ENCODE measurements at regions of chr11 and their contacts with region 1.

Region 1: GRCh38 chr11:92211576-92212167 is 12.9 kb upstream of the FAT3 start:
- DNase-seq: peak; percentile 33
- ATAC-seq: peak; percentile 83
- H3K4me3 ChIP-seq: no peak overlapping the region
- H3K27ac ChIP-seq: no peak overlapping the region
- H3K4me1 ChIP-seq: no peaks in the 10 kb centered on the region
- H3K27me3 ChIP-seq: no peaks in the 10 kb centered on the region
- CTCF ChIP-seq: peak; percentile 39
- POLR2A ChIP-seq: no peak
- RAD21 ChIP-seq: peak; percentile 60

Region 2: GRCh38 chr11:91707652-91708482 is 503.8 kb before region 1 on chr11:
- CTCF ChIA-PET with region 1: no interaction called
- POLR2A ChIA-PET with region 1: no interaction called
- dilution Hi-C with region 1: no loop called
- in situ Hi-C with region 1: no loop called
- intact Hi-C with region 1: no loop called
- DNase-seq: no peak
- ATAC-seq: no peak
- H3K4me3 ChIP-seq: no peak overlapping the region
- H3K27ac ChIP-seq: no peak overlapping the region
- H3K4me1 ChIP-seq: no peaks in the 10 kb centered on the region
- H3K27me3 ChIP-seq: no peaks in the 10 kb centered on the region
- CTCF ChIP-seq: no peak
- POLR2A ChIP-seq: no peak
- RAD21 ChIP-seq: no peak

Region 3: DNA sequence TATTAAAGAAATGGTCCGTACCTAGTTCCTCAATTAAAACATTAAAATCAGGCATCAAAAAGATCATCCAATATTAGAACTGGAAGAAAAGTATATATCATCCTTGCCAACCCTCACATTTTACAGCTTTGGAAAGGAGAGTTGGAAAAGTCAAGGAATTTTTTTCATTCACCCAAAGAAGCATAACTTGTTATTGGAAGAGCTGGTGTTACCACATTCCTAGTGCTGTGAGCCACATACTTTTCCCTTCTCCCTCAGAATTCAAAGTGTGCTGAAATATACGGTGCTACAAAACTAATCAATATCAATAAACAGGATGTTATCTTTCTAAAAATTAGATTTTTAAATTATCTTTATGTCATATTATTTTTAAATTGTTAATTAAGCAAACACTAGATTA is 189.2 kb before region 1 on chr11:
- CTCF ChIA-PET with region 1: no interaction called
- POLR2A ChIA-PET with region 1: no interaction called
- dilution Hi-C with region 1: no loop called
- in situ Hi-C with region 1: no loop called
- intact Hi-C with region 1: no loop called
- DNase-seq: no peak
- ATAC-seq: no peak
- H3K4me3 ChIP-seq: no peak overlapping the region
- H3K27ac ChIP-seq: no peak overlapping the region
- H3K4me1 ChIP-seq: no peaks in the 10 kb centered on the region
- H3K27me3 ChIP-seq: no peaks in the 10 kb centered on the region
- CTCF ChIP-seq: no peak
- POLR2A ChIP-seq: no peak
- RAD21 ChIP-seq: no peak

Region 4: GRCh38 chr11:92276773-92277172 is 65.1 kb after region 1 on chr11:
- CTCF ChIA-PET with region 1: no interaction called
- POLR2A ChIA-PET with region 1: no interaction called
- dilution Hi-C with region 1: no loop called
- in situ Hi-C with region 1: no loop called
- intact Hi-C with region 1: loop called (anchors 10 kb)
- DNase-seq: peak; percentile 52
- ATAC-seq: no peak
- H3K4me3 ChIP-seq: no peak overlapping the region
- H3K27ac ChIP-seq: no peak overlapping the region
- H3K4me1 ChIP-seq: no peaks in the 10 kb centered on the region; the same call in 1 of the 2 replicates
- H3K27me3 ChIP-seq: no peaks in the 10 kb centered on the region
- CTCF ChIP-seq: no peak
- POLR2A ChIP-seq: no peak
- RAD21 ChIP-seq: no peak

Region 5: GRCh38 chr11:92552942-92553341 is 341.3 kb after region 1 on chr11:
- CTCF ChIA-PET with region 1: no interaction called
- POLR2A ChIA-PET with region 1: no interaction called
- dilution Hi-C with region 1: no loop called
- in situ Hi-C with region 1: loop called (anchors 25 kb)
- intact Hi-C with region 1: loop called (anchors 1 kb)
- DNase-seq: peak; percentile 4
- ATAC-seq: no peak
- H3K4me3 ChIP-seq: no peak overlapping the region
- H3K27ac ChIP-seq: no peak overlapping the region
- H3K4me1 ChIP-seq: no peaks in the 10 kb centered on the region
- H3K27me3 ChIP-seq: no peaks in the 10 kb centered on the region
- CTCF ChIP-seq: peak; percentile 46
- POLR2A ChIP-seq: no peak
- RAD21 ChIP-seq: peak; percentile 55

Measured in IMR-90 (cell line).